ENCODE measurements at regions of chr2 and their contacts with region 1.

Region 1: DNA sequence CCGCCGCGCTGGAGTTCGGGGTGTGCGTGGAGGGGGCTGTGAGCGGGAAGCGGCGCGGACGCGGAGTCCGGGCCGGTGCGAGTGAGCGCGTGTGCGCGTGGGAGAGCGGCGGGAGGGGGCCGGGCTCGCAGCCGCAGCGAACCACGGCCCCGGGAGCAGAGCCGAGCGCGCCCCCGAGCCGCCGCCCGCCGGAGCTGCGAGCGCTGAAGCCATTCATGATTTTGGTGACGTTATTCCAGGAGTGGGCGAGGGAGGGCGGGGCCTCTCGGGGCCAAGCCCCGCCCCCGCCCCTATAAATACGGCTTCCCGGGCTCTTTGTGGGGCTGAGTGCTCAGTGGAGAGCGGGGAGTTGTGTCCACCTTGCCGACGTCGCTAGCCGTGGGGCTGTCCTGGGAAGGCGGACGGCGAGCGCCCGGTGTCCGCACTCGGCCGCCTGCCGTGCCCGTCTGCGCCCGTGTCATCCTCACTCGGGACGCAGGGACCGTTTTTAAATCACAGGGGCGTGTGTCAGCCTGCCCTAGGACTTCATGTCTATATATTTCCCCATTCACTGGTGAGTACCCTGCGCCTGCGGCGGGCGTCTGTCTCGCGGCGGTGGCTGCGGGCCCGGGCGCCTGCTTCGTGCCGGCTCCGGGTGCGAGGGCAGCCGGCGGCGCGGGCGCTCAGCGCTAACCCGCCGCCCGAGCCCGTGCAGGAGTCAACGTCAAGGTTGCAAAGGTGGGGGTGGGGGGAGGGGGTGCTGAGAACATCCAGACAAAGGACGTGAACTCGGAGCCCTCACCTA is at the start of gene LBH:
- DNase-seq: peak; percentile 88 to 91 (median 89)
- H3K4me3 ChIP-seq: peak within 1 kb of the TSS; percentile 63 to 92
- H3K4me3 Mint-ChIP-seq: peak within 1 kb of the TSS; percentile 89 to 99 (median 96)
- H3K27ac ChIP-seq: peak within 1 kb of the TSS; percentile 93
- H3K27ac Mint-ChIP-seq: peak within 1 kb of the TSS; percentile 87 to 97 (median 91)
- H3K4me1 ChIP-seq: peaks cover 64% of the 10 kb centered on the region
- H3K4me1 Mint-ChIP-seq: peaks cover 36 to 76% (median 55%) of the 10 kb centered on the region in 4 donors
- H3K27me3 ChIP-seq: no peaks in the 10 kb centered on the region
- H3K27me3 Mint-ChIP-seq: no peaks in the 10 kb centered on the region
- total RNA-seq, gene LBH: 335 to 364 TPM

Region 2: GRCh38 chr2:30122362-30122761 is 109.0 kb before region 1 on chr2:
- CTCF ChIA-PET with region 1: no interaction called
- POLR2A ChIA-PET with region 1: no interaction called
- intact Hi-C with region 1: no loop called
- DNase-seq: no peak
- H3K4me3 ChIP-seq: no peak overlapping the region
- H3K4me3 Mint-ChIP-seq: no peak overlapping the region
- H3K27ac ChIP-seq: no peak overlapping the region
- H3K27ac Mint-ChIP-seq: no peak overlapping the region
- H3K4me1 ChIP-seq: no peaks in the 10 kb centered on the region
- H3K4me1 Mint-ChIP-seq: no peaks in the 10 kb centered on the region
- H3K27me3 ChIP-seq: peaks cover 6% of the 10 kb centered on the region
- H3K27me3 Mint-ChIP-seq: peaks cover 11 to 13% of the 10 kb centered on the region in 2 donors

Region 3: DNA sequence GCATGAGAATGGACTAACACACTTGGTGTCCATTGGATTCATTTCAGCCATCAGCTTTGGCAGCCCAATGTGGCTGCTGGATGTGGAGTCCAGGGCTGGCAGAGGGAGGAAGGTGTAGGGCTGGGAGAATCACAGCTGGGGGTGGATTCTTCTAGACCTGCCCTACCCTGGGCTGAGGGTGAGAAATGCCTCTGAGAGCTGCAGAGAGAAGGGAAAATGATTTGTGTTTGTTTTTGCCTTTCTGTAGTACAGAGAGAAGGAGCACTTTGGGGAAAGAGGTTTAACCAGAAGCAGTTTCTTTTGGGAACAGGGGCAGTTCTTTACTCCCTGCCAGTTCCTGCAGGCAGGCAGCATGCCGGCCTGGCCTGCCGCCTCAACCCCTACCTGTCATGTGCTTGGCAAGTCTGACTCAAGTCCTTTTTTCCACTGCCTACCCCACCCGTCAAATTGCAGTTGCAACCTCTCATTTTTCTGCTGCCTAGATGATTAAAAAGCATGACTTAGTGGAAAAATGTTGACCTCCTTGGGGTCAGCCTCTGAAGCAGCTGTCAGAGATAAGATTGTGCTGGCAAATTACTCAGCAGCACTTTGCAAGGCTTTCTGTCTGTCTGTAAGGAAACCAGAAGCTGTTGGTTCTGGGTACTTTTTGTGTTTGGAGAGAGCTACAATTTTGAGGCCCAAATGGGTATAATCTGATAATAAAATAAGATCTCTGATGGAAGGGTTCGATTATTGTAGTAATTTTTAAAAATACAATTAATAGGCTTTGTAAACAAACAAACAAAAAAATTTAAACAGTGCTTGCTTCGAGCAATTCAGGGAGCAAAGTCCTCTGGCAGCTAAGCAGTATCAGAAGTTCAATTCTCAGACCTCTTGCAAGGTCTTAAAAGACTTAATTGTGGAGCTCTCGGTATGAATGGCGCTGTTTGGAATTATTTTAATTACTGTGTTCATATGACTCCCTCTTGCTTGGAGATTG is 21.6 kb after region 1 on chr2:
- CTCF ChIA-PET with region 1: interaction called, 65 read pairs
- POLR2A ChIA-PET with region 1: interaction called, 435 read pairs
- intact Hi-C with region 1: loop called (anchors 2 kb)
- DNase-seq: peak in 4 of 5 donors; percentile 13 to 85 (median 25)
- H3K4me3 ChIP-seq: peak overlapping the region in 1 of 2 donors; percentile 17
- H3K4me3 Mint-ChIP-seq: peak overlapping the region in 7 of 8 donors; percentile 59 to 83 (median 76)
- H3K27ac ChIP-seq: peak overlapping the region; percentile 37
- H3K27ac Mint-ChIP-seq: peak overlapping the region; percentile 72 to 97 (median 93)
- H3K4me1 ChIP-seq: peaks cover 98% of the 10 kb centered on the region
- H3K4me1 Mint-ChIP-seq: peaks cover 63 to 99% (median 89%) of the 10 kb centered on the region in 4 donors
- H3K27me3 ChIP-seq: no peaks in the 10 kb centered on the region
- H3K27me3 Mint-ChIP-seq: no peaks in the 10 kb centered on the region

Region 4: DNA sequence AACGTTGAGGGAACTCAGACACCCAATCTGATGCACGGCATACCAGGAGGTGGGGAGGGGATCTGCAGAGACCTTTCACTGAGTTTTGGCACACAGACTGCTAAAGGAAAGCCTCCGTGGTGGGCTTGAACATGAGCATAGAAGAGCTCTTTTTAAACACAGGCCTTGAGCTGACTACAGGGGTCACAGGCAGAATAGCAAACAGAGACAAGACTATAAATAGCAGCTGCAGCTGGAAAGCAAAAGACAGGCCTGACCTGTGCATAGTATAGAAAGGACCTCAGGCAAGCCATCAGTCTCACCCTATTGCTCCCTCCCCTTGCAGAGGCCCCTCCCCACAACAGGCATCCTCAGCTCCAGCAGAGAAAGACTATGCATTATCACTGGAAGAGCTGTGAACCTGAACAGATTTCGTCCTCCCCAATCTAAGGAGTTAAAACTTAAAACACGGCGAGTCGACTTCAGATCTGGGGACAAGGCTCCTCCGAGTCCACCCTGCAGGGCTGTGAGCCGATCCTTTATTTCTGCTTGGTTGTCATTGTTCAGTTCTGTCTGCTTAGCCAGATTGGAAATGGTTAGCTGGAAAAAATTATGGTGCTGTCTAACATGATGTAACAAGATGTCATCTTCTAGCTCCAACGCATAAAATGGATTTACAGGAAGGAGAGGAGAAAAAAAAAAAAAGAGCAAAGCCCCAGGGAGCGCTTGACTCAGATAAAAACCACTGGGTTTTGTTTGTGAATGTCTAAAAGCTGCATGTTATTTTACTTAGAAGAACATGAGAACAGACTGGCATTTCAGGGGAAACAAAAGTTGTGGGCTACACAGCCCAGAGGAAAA is 190.4 kb after region 1 on chr2:
- CTCF ChIA-PET with region 1: interaction called, 3 read pairs
- POLR2A ChIA-PET with region 1: interaction called, 25 read pairs
- intact Hi-C with region 1: loop called (anchors 2 kb)
- DNase-seq: peak in 4 of 5 donors; percentile 16 to 58 (median 26)
- H3K4me3 ChIP-seq: no peak overlapping the region
- H3K4me3 Mint-ChIP-seq: peak overlapping the region; percentile 23 to 74 (median 61)
- H3K27ac ChIP-seq: peak overlapping the region; percentile 40
- H3K27ac Mint-ChIP-seq: peak overlapping the region; percentile 68 to 93 (median 84)
- H3K4me1 ChIP-seq: peaks cover 33% of the 10 kb centered on the region
- H3K4me1 Mint-ChIP-seq: peaks cover 26 to 47% (median 31%) of the 10 kb centered on the region in 4 donors
- H3K27me3 ChIP-seq: no peaks in the 10 kb centered on the region
- H3K27me3 Mint-ChIP-seq: no peaks in the 10 kb centered on the region

Region 5: GRCh38 chr2:30447149-30448045 is 216.0 kb after region 1 on chr2 and contains the start of gene LCLAT1:
- CTCF ChIA-PET with region 1: interaction called, 5 read pairs
- POLR2A ChIA-PET with region 1: interaction called, 58 read pairs
- intact Hi-C with region 1: loop called (anchors 1 kb)
- DNase-seq: peak; percentile 87 to 88 (median 88)
- H3K4me3 ChIP-seq: peak within 1 kb of the TSS; percentile 48 to 96
- H3K4me3 Mint-ChIP-seq: peak within 1 kb of the TSS; percentile 95 to 99 (median 96)
- H3K27ac ChIP-seq: peak within 1 kb of the TSS; percentile 83
- H3K27ac Mint-ChIP-seq: peak within 1 kb of the TSS; percentile 89 to 99 (median 98)
- H3K4me1 ChIP-seq: peaks cover 27% of the 10 kb centered on the region
- H3K4me1 Mint-ChIP-seq: peaks cover 23 to 40% (median 30%) of the 10 kb centered on the region in 4 donors
- H3K27me3 ChIP-seq: no peaks in the 10 kb centered on the region
- H3K27me3 Mint-ChIP-seq: peaks cover 0 to 1% of the 10 kb centered on the region in 2 donors
- total RNA-seq, gene LCLAT1: 11.5 to 14.1 TPM

Region 6: DNA sequence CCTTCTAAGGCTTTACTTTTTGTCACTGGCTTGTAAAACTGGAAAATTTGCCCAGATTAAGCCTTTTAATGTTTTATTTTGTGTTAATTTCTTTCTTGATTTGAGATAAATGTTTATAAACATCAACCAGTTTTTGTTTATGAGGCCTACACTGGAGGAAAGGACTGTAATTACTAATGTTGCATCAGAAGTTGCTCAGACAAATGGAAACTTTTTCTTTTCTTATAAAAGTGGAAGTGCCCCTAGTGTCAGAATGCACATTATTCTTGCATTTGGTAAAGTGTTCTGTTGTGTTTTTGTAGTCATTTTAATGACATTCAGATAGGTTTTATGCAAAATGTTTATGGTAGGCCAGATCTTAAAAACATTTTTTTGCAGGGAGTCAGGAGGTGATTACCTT is 240.9 kb after region 1 on chr2:
- CTCF ChIA-PET with region 1: interaction called, 5 read pairs
- POLR2A ChIA-PET with region 1: interaction called, 5 read pairs
- intact Hi-C with region 1: loop called (anchors 2 kb)
- DNase-seq: no peak
- H3K4me3 ChIP-seq: no peak overlapping the region
- H3K4me3 Mint-ChIP-seq: no peak overlapping the region
- H3K27ac ChIP-seq: no peak overlapping the region
- H3K27ac Mint-ChIP-seq: peak overlapping the region in 1 of 7 donors; percentile 51
- H3K4me1 ChIP-seq: no peaks in the 10 kb centered on the region
- H3K4me1 Mint-ChIP-seq: peaks cover 12 to 17% (median 15%) of the 10 kb centered on the region in 4 donors
- H3K27me3 ChIP-seq: no peaks in the 10 kb centered on the region
- H3K27me3 Mint-ChIP-seq: no peaks in the 10 kb centered on the region

Measured in CD4-positive, alpha-beta memory T cell (primary cell).